ENCODE measurements at regions of chr2 and their contacts with region 1.

Region 1: DNA sequence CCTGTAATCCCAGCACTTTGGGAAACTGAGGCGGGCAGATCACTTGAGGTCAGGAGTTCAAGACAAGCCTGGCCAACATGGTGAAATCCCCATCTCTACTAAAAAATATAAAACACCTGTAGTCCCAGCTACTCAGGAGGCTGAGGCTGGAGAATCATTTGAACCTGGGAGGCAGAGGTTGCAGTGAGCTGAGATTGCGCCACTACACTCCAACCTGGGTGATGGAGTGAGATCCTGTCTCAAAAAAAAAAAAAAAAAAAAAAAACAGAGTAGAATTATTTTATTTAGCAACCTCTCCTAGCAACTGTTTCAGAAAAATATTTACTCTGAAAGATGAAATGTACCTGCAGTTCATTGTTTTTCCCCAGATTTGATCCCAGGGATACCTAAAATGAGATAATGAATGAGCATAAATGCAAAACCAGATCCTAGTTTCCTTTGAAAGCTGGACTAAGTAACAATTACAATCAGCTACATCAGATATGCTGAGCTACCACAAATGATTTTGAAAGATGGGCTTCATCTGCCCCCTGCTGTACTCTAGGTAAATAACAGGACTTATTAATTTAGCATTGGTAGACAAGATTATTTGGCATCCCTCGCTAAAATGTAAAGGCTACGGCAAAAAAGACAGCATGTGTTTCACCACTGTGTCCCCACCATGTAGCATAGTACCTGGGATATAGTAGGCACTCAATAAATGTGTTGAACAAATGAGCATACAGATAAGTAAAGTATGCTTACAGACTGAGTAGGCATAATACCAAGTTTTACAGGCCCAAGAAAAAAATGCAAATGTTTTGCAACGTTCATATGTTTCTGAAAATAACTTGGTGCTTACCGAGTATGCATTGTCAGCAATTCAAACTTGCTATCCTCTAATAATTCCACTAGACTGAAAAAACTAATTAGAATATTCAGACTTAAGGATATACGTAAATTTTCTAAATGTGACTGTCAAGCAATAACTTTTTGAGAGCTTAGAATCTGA is 102.5 kb downstream of the ATL2 start:
- DNase-seq: no peak
- H3K4me3 ChIP-seq: no peak overlapping the region
- H3K27ac ChIP-seq: no peak overlapping the region
- H3K4me1 ChIP-seq: peaks cover 0 to 6% (median 0%) of the 10 kb centered on the region in 4 donors
- H3K27me3 ChIP-seq: no peaks in the 10 kb centered on the region
- CTCF ChIP-seq: peak; percentile 44 to 78 (median 64)
- EP300 ChIP-seq: no peak
- POLR2A ChIP-seq: no peak

Region 2: DNA sequence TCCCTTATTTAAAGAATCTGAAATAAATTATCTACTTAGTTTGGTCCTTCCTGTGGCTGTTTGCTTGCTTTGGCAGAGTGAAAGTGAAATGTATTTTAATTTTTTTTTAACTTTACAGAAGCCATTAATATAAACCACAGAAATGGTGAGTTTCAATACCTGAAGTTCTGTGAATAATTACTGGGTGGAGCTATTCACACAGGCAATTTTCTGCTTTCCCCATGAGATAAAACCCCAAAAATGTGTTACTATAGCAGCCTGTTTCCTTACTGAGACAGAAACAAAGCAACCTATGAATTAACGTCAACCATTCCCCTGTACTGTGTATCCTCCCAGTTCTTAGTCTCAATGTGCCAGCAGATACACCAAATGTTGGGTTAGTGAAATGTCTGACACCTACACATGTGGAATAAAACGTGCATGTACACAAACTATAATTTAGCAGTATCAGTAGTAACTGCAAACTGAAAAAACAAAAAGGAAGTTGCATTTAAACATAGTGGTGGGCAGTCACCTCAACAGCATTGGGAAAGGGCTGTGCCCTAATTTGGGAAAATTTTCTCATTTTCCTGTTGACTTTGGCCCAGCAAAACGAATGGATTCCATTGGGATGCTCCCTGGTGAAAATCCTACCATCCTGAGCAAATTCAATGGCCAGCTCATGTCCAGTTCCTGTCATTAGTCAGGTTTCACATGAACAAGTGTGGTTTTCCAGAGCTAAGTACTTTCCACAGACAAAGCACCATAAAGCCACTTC is 422.6 kb before region 1 on chr2:
- intact Hi-C with region 1: no loop called
- DNase-seq: no peak
- H3K4me3 ChIP-seq: no peak overlapping the region
- H3K27ac ChIP-seq: peak overlapping the region; percentile 13 to 61 (median 57)
- H3K4me1 ChIP-seq: peaks cover 0 to 51% (median 32%) of the 10 kb centered on the region in 4 donors
- H3K27me3 ChIP-seq: no peaks in the 10 kb centered on the region
- CTCF ChIP-seq: no peak
- EP300 ChIP-seq: no peak
- POLR2A ChIP-seq: no peak

Region 3: GRCh38 chr2:37890893-37891495 is 383.6 kb before region 1 on chr2:
- intact Hi-C with region 1: loop called (anchors 10 kb)
- DNase-seq: peak; percentile 83
- H3K4me3 ChIP-seq: no peak overlapping the region
- H3K27ac ChIP-seq: no peak overlapping the region
- H3K4me1 ChIP-seq: peaks cover 0 to 7% (median 0%) of the 10 kb centered on the region in 4 donors
- H3K27me3 ChIP-seq: no peaks in the 10 kb centered on the region
- CTCF ChIP-seq: peak; percentile 38 to 80 (median 68)
- EP300 ChIP-seq: no peak
- POLR2A ChIP-seq: no peak

Region 4: GRCh38 chr2:37982147-37982582 is 292.4 kb before region 1 on chr2:
- intact Hi-C with region 1: loop called (anchors 1 kb)
- DNase-seq: peak; percentile 78
- H3K4me3 ChIP-seq: peak overlapping the region in 3 of 4 donors; percentile 20 to 23 (median 22)
- H3K27ac ChIP-seq: no peak overlapping the region
- H3K4me1 ChIP-seq: peaks cover 0 to 5% (median 2%) of the 10 kb centered on the region in 4 donors
- H3K27me3 ChIP-seq: no peaks in the 10 kb centered on the region
- CTCF ChIP-seq: peak; percentile 59 to 88 (median 80)
- EP300 ChIP-seq: no peak
- POLR2A ChIP-seq: no peak

Region 5: GRCh38 chr2:38076606-38077430 is 197.8 kb before region 1 on chr2:
- intact Hi-C with region 1: loop called (anchors 1 kb)
- DNase-seq: peak; percentile 88
- H3K4me3 ChIP-seq: peak overlapping the region; percentile 32 to 64 (median 60)
- H3K27ac ChIP-seq: peak overlapping the region; percentile 72 to 84 (median 78)
- H3K4me1 ChIP-seq: peaks cover 0 to 41% (median 34%) of the 10 kb centered on the region in 4 donors
- H3K27me3 ChIP-seq: peaks cover 0 to 37% (median 18%) of the 10 kb centered on the region in 3 donors
- CTCF ChIP-seq: peak in 2 of 4 experiments; percentile 29 to 54
- EP300 ChIP-seq: no peak
- POLR2A ChIP-seq: no peak

Region 6: DNA sequence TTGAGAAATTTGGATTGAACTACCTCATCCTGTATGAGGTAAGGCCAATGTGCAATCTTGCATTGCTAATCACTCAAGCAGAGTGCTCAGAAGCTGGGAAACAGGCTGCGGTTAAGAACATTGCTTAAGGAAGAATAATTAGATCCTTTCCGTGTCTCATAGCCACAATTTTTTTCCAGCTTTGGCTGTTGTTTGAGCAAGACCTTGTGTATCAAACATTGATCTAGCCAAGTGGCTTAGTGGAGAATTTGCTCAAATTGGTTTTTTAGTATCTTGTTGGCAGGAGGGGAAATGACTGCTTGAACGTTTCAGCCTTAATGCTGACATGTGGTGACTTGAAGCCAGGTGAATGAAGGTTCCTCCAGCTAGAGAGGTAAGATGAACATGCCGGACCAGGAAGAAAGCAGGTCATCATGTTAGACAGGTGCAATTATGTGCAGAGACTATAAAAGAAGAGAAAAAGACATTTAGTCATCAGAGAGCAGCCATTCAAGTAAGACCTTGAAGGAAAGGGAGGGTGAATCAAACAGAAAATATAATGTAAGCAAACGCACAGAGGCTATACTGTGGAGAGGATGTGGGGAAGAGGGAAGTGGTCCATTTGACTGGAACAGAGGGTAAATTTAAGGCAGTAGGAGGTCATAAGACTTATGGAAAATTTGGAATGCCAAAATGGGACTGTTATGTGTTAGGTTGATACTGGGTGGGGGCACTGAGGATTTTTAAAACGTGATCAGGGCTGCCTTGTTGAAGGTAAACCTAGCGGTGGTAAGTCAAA is 99.7 kb before region 1 on chr2:
- intact Hi-C with region 1: loop called (anchors 5 kb)
- DNase-seq: no peak
- H3K4me3 ChIP-seq: no peak overlapping the region
- H3K27ac ChIP-seq: peak overlapping the region in 1 of 4 donors; percentile 48
- H3K4me1 ChIP-seq: peaks cover 0 to 26% (median 14%) of the 10 kb centered on the region in 4 donors
- H3K27me3 ChIP-seq: no peaks in the 10 kb centered on the region
- CTCF ChIP-seq: no peak
- EP300 ChIP-seq: no peak
- POLR2A ChIP-seq: no peak